ENCODE measurements at regions of chr10 and their contacts with region 1.

Region 1: GRCh38 chr10:113087165-113088029 is 137.3 kb downstream of the TCF7L2 start:
- DNase-seq: peak; percentile 67 to 97
- H3K4me3 ChIP-seq: no peak overlapping the region; the same call in 1 of the 2 replicates
- H3K27ac ChIP-seq: peak overlapping the region; percentile 96
- H3K4me1 ChIP-seq: peaks cover 56% of the 10 kb centered on the region
- H3K27me3 ChIP-seq: no peaks in the 10 kb centered on the region
- CTCF ChIP-seq: no peak

Region 2: DNA sequence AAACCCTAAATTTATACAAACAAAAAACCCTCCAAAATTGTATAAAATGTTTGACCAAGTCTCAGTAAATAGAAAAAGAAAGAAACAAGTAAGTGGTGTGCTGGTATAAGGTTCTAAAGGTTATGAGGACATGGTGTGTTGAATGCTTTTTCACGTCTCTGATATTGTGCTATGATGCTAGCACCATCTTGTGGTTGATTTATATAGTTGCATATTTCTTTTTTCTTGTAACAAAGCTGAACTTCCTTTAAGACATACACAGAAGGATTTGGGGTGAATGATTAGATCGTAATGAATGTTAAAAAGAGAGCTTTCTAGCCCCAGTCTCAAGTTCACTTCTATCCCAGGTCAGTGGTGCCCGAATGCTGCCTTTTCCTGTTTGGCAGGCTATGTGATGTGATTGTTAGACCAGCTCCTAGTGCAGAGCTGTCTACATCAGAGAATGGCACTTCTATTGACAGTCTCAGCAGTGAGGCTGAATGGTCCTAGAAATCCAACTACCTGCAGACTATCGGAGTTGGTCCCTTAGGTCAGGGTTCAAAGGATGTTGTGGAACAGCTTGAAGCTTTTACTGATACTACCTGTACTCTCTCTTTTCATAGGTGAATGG is 615.4 kb before region 1 on chr10:
- CTCF ChIA-PET with region 1: no interaction called
- POLR2A ChIA-PET with region 1: interaction called, 24 read pairs
- intact Hi-C with region 1: no loop called
- DNase-seq: peak in 1 of 2 experiments; percentile 45
- H3K4me3 ChIP-seq: no peak overlapping the region
- H3K27ac ChIP-seq: no peak overlapping the region
- H3K4me1 ChIP-seq: no peaks in the 10 kb centered on the region
- H3K27me3 ChIP-seq: no peaks in the 10 kb centered on the region
- CTCF ChIP-seq: peak; percentile 68

Region 3: DNA sequence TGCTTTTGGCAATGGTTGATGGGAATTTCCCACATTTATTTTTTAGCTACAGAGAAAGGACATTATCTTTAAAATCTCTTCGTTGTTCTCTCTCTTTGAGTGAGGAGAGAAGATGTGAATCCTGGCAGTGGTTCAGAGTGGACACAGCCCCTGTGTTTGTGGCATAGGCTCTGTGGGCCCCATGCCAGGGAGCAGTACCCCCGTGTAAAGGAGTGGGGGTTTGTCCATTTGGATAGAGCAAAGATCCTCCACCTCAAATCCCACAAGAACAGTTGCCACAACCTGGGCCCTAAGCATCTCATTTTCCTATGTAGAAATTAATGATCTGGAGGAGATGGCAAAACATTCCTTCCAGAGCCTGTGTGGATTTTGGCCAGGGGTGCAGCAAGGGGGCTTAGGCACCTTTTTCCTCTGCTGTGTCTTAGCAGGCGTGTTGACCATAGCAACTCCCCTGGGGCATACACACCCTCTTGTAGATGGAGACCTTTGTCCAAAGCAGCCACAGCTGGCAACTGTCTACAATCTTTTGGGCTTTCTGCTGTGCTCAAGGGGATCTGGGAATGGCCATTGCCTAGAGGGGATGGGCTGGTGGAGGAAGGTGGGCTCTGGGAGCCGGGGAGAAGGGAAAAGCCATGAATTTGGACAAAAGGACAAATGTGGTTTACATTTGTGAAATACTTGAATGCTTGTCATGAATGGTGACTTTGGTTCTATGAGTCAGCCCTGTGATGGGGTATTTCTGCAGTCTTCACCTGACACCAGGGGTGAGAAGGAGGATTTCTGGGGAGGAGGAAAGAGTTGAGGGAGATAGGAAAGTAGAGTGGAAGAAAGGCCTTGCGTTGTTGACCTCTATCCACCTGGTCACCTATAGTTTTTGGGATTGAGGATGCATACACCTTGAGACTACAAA is 45.3 kb before region 1 on chr10:
- CTCF ChIA-PET with region 1: no interaction called
- POLR2A ChIA-PET with region 1: interaction called, 25 read pairs
- intact Hi-C with region 1: no loop called
- DNase-seq: no peak
- H3K4me3 ChIP-seq: no peak overlapping the region
- H3K27ac ChIP-seq: 0 out of 2 replicates have a peak overlapping the region, but pooled peaks have one; percentile 12
- H3K4me1 ChIP-seq: peaks cover 27% of the 10 kb centered on the region
- H3K27me3 ChIP-seq: no peaks in the 10 kb centered on the region
- CTCF ChIP-seq: no peak

Region 4: DNA sequence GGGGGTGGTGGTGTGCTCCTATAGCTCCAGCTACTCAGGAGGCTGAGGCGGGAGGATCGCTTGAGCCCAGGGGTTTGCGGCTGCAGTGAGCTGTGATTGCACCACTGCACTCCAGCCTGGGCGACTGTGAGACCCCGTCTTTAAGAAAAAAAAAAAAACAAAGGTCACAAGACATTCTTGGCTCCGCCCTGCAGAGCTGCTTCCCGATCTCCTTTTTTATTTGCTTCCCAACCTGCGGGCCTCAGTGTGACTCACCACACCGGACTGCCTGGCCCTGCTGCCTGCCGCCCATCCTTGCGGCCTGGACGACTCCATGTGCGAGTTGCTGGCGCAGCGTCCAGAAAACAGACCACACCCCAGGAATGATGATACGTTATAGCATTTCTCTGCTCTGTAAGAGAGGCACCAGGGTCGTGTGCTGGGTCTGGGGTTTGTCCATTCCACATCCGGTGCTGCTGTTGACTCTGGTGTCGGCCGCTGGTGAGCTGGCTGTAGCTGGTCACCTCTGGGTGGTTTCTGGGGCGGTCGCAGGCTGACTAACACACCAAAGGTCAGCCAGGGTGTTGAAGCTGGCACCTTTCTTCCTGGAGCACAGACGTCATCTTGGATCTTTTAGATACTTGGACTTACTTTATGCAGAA is 13.7 kb before region 1 on chr10:
- CTCF ChIA-PET with region 1: no interaction called
- POLR2A ChIA-PET with region 1: interaction called, 5 read pairs
- intact Hi-C with region 1: loop called (anchors 1 kb)
- DNase-seq: peak; percentile 89 to 96
- H3K4me3 ChIP-seq: peak overlapping the region; percentile 28; the same call in 1 of the 2 replicates
- H3K27ac ChIP-seq: peak overlapping the region; percentile 84
- H3K4me1 ChIP-seq: peaks cover 27% of the 10 kb centered on the region
- H3K27me3 ChIP-seq: no peaks in the 10 kb centered on the region
- CTCF ChIP-seq: no peak

Measured in PC-9 (cell line).